Panc1 (cell line): ENCODE measurements at regions of chr1 and their contacts with region 1.

Region 1: GRCh38 chr1:32695098-32695904 is 7.3 kb downstream of the SYNC start:
- DNase-seq: no peak
- ATAC-seq: 0 out of 2 replicates have a peak, but pooled peaks have one; percentile 26
- H3K4me3 ChIP-seq: no peak overlapping the region
- H3K27ac ChIP-seq: no peak overlapping the region
- H3K4me1 ChIP-seq: no peaks in the 10 kb centered on the region
- H3K27me3 ChIP-seq: no peaks in the 10 kb centered on the region
- CTCF ChIP-seq: no peak

Region 2: GRCh38 chr1:32681509-32681908 is 13.8 kb before region 1 on chr1:
- CTCF ChIA-PET with region 1: no interaction called
- POLR2A ChIA-PET with region 1: interaction called, 10 read pairs
- in situ Hi-C with region 1: no loop called
- intact Hi-C with region 1: no loop called
- DNase-seq: no peak
- ATAC-seq: no peak
- H3K4me3 ChIP-seq: no peak overlapping the region
- H3K27ac ChIP-seq: no peak overlapping the region
- H3K4me1 ChIP-seq: no peaks in the 10 kb centered on the region
- H3K27me3 ChIP-seq: no peaks in the 10 kb centered on the region
- CTCF ChIP-seq: no peak